Mammary epithelial cell (primary cell): ENCODE measurements at regions of chr4 and their contacts with region 1.

Region 1: GRCh38 chr4:170138580-170139194 is 48.9 kb upstream of the AADAT start:
- DNase-seq: peak; percentile 63
- H3K4me3 ChIP-seq: no peak overlapping the region
- H3K27ac ChIP-seq: no peak overlapping the region
- H3K4me1 ChIP-seq: peaks cover 9% of the 10 kb centered on the region
- H3K27me3 ChIP-seq: no peaks in the 10 kb centered on the region
- CTCF ChIP-seq: peak; percentile 82 to 91

Region 2: GRCh38 chr4:170122252-170122651 is 16.4 kb before region 1 on chr4:
- CTCF ChIA-PET with region 1: no interaction called
- dilution Hi-C with region 1: no loop called
- in situ Hi-C with region 1: no loop called
- intact Hi-C with region 1: no loop called
- DNase-seq: peak; percentile 53
- H3K4me3 ChIP-seq: no peak overlapping the region
- H3K27ac ChIP-seq: no peak overlapping the region
- H3K4me1 ChIP-seq: peaks cover 5% of the 10 kb centered on the region
- H3K27me3 ChIP-seq: no peaks in the 10 kb centered on the region
- CTCF ChIP-seq: no peak

Region 3: GRCh38 chr4:170374770-170375169 is 236.1 kb after region 1 on chr4:
- CTCF ChIA-PET with region 1: no interaction called
- dilution Hi-C with region 1: no loop called
- in situ Hi-C with region 1: no loop called
- intact Hi-C with region 1: loop called (anchors 10 kb)
- DNase-seq: peak; percentile 45
- H3K4me3 ChIP-seq: no peak overlapping the region
- H3K27ac ChIP-seq: no peak overlapping the region
- H3K4me1 ChIP-seq: no peaks in the 10 kb centered on the region
- H3K27me3 ChIP-seq: no peaks in the 10 kb centered on the region
- CTCF ChIP-seq: peak; percentile 67 to 88

Region 4: DNA sequence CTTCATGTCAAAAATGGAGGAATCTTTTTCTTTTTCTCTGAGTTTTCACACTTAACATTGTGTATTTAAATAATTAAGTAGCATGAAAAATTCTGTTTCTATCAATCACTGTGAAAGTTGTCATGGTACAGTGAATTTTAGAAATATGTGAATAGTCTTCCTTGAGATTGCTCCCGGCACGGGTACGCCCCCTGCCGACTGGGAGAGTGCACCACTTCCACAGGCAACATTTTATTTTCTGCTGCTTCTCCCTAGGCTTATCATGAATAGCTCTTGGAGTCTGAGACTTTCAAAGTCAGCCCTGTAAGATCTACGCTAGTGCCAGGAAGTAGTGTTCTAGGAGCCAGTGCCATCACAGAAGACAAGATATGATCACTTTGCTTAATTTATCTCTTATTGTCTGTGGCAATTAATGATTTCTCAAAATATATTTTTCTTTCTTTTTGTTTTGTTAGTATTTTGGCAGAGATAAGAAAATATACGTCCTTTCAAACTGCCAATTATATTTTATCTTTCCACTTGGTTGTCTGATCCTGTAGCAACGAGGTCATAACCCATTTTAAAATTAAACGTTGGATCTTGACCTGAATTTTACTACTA is 714.8 kb after region 1 on chr4:
- CTCF ChIA-PET with region 1: no interaction called
- dilution Hi-C with region 1: no loop called
- in situ Hi-C with region 1: no loop called
- intact Hi-C with region 1: loop called (anchors 1 kb)
- DNase-seq: peak; percentile 44
- H3K4me3 ChIP-seq: no peak overlapping the region
- H3K27ac ChIP-seq: no peak overlapping the region
- H3K4me1 ChIP-seq: peaks cover 5% of the 10 kb centered on the region
- H3K27me3 ChIP-seq: no peaks in the 10 kb centered on the region
- CTCF ChIP-seq: peak; percentile 93 to 97